Activated CD8-positive, alpha-beta T cell treated with anti-CD3 and anti-CD28 coated beads for 36 hours (primary cell): ENCODE measurements at regions of chr9 and their contacts with region 1.

Region 1: DNA sequence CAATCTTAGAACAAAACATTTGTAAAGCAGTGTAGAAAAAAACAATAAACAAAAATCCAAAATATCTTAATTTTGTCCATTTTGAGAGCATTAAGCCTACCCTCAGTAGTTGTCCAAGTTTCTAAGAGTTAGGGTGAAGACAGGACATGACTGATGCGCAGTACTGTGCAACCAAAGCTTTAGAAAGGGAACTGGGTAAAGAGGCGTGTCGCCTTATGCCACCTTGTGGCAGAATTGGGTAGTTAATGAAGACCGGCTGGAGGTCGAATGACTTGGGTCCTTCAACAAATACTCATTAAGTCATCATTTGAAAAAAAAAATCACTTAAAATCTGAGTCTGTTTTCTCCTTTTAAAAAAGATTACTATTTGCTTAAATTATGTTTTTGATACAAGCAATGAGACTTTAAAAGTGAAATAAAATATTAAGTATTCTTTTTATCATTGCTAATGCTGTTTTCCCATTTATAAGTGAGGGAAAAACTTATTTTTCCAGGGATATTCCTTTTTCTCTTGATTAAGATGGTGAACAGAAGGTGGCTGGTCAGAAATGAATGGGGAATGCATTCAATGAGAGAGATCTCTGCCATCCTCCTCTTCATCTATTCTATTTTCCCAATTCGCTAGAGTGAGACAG is 3.5 kb upstream of the RNF20 start:
- DNase-seq: peak; percentile 80
- ATAC-seq: peak; percentile 43
- H3K4me3 Mint-ChIP-seq: no peak overlapping the region
- H3K27ac Mint-ChIP-seq: no peak overlapping the region
- H3K4me1 Mint-ChIP-seq: peaks cover 1% of the 10 kb centered on the region
- H3K27me3 Mint-ChIP-seq: peaks cover 6% of the 10 kb centered on the region
- CTCF ChIP-seq: peak; percentile 85

Region 2: GRCh38 chr9:101449140-101449721 is 81.0 kb before region 1 on chr9:
- CTCF ChIA-PET with region 1: interaction called, 17 read pairs
- POLR2A ChIA-PET with region 1: no interaction called
- intact Hi-C with region 1: no loop called
- DNase-seq: peak; percentile 68
- ATAC-seq: peak; percentile 97
- H3K4me3 Mint-ChIP-seq: peak overlapping the region; percentile 59
- H3K27ac Mint-ChIP-seq: no peak overlapping the region
- H3K4me1 Mint-ChIP-seq: peaks cover 4% of the 10 kb centered on the region
- H3K27me3 Mint-ChIP-seq: peaks cover 47% of the 10 kb centered on the region
- CTCF ChIP-seq: peak; percentile 69